Psoas muscle (tissue), 8 donors: ENCODE measurements at regions of chr2 and their contacts with region 1.

Region 1: DNA sequence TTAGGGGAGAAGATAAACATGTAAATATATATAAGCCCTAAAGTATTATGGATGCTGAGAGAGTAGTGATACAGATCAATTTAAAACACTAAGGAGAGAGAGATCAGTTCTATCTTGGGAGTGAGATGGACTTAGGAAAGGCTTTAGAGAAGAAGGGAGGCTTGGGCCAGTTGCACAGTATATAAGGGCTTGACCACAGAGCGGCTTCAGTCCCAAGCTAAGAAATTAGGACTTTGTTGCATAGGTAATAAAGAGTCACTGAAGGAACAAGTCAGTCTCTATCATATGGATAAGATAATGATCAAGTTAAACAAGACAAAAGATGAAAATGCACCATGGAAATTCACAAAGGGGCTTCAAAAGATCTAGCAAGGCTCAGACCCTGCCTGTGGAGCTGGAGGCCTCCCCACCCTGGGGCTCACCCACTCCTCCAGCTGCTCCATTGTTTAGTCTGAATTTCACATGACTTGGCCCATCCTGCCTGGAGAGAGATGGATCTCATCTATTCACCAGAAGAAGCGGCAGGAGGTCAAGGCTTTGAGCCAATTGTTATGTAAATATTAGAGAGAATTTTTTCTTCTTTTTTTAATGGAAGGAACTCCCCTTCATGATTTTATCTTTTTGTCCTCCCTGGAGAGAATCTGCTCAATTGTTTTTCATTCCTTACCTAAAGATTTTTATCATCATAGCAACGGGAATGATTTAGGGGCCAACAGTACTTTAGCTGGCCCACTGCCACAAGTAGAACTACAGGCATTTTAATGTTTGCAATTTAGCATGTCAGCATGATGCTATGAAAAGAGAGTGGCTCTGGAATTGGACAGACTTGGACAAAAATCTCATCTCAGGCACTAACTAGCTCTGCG is 44.0 kb downstream of the GYPC start:
- DNase-seq: no peak
- ATAC-seq: no peak
- H3K4me3 ChIP-seq: no peak overlapping the region
- H3K27ac ChIP-seq: peak overlapping the region; percentile 3
- H3K4me1 ChIP-seq: peaks cover 17% of the 10 kb centered on the region
- H3K27me3 ChIP-seq: no peaks in the 10 kb centered on the region
- CTCF ChIP-seq: no peak

Region 2: DNA sequence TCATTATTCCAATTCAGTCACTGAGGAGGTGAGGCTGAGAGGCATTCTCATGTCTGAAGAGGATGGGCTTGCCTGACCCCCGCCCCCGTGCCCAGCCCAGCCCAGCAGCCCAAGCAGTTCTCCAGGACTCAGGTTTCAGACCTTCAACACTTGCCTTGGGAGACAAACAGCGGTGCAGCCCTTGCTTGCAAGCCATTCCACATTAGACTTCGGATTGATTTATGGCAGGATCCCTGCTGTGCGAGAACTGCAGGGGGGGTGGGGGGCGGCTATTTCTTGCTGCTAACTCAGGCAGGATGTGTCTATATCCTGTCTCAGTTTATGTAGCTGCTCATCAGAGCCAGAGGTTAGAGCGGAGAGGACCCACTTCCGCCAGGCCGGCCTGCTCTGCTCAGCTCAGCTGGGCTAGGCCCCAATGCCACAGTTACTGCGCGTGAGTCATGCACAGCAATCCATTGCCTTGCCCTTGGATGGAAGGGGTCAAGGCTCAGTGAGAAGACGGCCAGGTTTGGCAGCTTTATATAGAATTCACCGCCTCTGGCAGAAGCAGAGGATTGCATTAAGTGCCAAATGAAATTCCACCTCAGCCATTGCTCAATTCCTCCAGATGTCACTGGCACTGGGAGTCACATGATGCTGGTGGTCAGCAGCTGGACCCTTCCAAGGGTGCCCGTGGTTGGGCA is 42.2 kb before region 1 on chr2:
- intact Hi-C with region 1: loop called in 1 of 2 experiments (anchors 5 kb)
- DNase-seq: peak; percentile 89 to 93
- ATAC-seq: peak; percentile 87 to 90 (median 88)
- H3K4me3 ChIP-seq: peak overlapping the region; percentile 85
- H3K27ac ChIP-seq: peak overlapping the region; percentile 97
- H3K4me1 ChIP-seq: peaks cover 51% of the 10 kb centered on the region
- H3K27me3 ChIP-seq: no peaks in the 10 kb centered on the region
- CTCF ChIP-seq: no peak

Region 3: GRCh38 chr2:126886211-126886915 is 186.4 kb after region 1 on chr2:
- intact Hi-C with region 1: no loop called
- DNase-seq: peak; percentile 62 to 82
- ATAC-seq: peak; percentile 73 to 92 (median 83)
- H3K4me3 ChIP-seq: peak overlapping the region; percentile 56
- H3K27ac ChIP-seq: no peak overlapping the region
- H3K4me1 ChIP-seq: no peaks in the 10 kb centered on the region
- H3K27me3 ChIP-seq: peaks cover 0 to 10% (median 0%) of the 10 kb centered on the region in 3 donors
- CTCF ChIP-seq: peak; percentile 56

Region 4: GRCh38 chr2:126907671-126908070 is 207.7 kb after region 1 on chr2:
- intact Hi-C with region 1: no loop called
- DNase-seq: no peak
- ATAC-seq: no peak
- H3K4me3 ChIP-seq: no peak overlapping the region
- H3K27ac ChIP-seq: no peak overlapping the region
- H3K4me1 ChIP-seq: no peaks in the 10 kb centered on the region
- H3K27me3 ChIP-seq: no peaks in the 10 kb centered on the region
- CTCF ChIP-seq: no peak